ENCODE measurements at regions of chr9 and their contacts with region 1.

Region 1: DNA sequence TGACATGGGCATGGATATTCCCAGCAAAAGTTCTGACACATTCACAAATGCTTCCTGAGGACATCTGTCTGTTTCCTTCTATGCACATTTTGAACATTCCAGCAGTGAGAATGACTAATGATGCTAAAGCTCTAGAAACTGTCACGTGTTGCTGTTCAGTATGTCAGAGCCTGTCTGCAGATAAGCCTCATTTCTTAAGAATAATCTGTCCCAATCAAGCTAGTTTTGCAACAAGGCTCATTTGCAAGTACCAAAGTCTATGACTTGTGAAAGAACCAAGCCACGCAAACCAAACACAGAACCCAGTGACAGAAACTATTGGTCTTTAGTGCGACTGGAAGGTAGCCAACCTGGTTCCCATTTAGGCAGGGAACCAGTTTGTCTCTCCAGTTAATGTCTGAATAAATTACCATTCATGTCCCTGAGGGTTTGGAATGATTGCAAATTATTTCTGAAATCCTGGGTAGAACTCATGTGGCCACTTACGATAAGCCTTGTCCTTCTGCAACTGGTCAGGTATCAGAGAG is 178.5 kb downstream of the C9orf152 start:
- DNase-seq: no peak
- ATAC-seq: no peak
- H3K4me3 Mint-ChIP-seq: no peak overlapping the region
- H3K27ac Mint-ChIP-seq: no peak overlapping the region
- H3K4me1 Mint-ChIP-seq: peaks cover 15% of the 10 kb centered on the region
- H3K27me3 Mint-ChIP-seq: no peaks in the 10 kb centered on the region
- CTCF ChIP-seq: no peak

Region 2: GRCh38 chr9:109934857-109935215 is 94.7 kb before region 1 on chr9:
- CTCF ChIA-PET with region 1: no interaction called
- POLR2A ChIA-PET with region 1: interaction called, 10 read pairs
- intact Hi-C with region 1: no loop called
- DNase-seq: no peak
- ATAC-seq: no peak
- H3K4me3 Mint-ChIP-seq: no peak overlapping the region
- H3K27ac Mint-ChIP-seq: peak overlapping the region; percentile 48
- H3K4me1 Mint-ChIP-seq: peaks cover 39% of the 10 kb centered on the region
- H3K27me3 Mint-ChIP-seq: no peaks in the 10 kb centered on the region
- CTCF ChIP-seq: no peak

Region 3: GRCh38 chr9:110015759-110016158 is 13.7 kb before region 1 on chr9:
- CTCF ChIA-PET with region 1: no interaction called
- POLR2A ChIA-PET with region 1: interaction called, 13 read pairs
- intact Hi-C with region 1: no loop called
- DNase-seq: no peak
- ATAC-seq: no peak
- H3K4me3 Mint-ChIP-seq: no peak overlapping the region
- H3K27ac Mint-ChIP-seq: no peak overlapping the region
- H3K4me1 Mint-ChIP-seq: peaks cover 5% of the 10 kb centered on the region
- H3K27me3 Mint-ChIP-seq: no peaks in the 10 kb centered on the region
- CTCF ChIP-seq: no peak

Region 4: GRCh38 chr9:110048403-110048975 is 19.0 kb after region 1 on chr9:
- CTCF ChIA-PET with region 1: no interaction called
- POLR2A ChIA-PET with region 1: interaction called, 5 read pairs
- intact Hi-C with region 1: loop called (anchors 2 kb)
- DNase-seq: peak; percentile 85
- ATAC-seq: peak; percentile 94
- H3K4me3 Mint-ChIP-seq: peak overlapping the region; percentile 99
- H3K27ac Mint-ChIP-seq: peak overlapping the region; percentile 91
- H3K4me1 Mint-ChIP-seq: peaks cover 54% of the 10 kb centered on the region
- H3K27me3 Mint-ChIP-seq: no peaks in the 10 kb centered on the region
- CTCF ChIP-seq: no peak